B cell (primary cell): ENCODE measurements at regions of chr6 and their contacts with region 1.

Region 1: DNA sequence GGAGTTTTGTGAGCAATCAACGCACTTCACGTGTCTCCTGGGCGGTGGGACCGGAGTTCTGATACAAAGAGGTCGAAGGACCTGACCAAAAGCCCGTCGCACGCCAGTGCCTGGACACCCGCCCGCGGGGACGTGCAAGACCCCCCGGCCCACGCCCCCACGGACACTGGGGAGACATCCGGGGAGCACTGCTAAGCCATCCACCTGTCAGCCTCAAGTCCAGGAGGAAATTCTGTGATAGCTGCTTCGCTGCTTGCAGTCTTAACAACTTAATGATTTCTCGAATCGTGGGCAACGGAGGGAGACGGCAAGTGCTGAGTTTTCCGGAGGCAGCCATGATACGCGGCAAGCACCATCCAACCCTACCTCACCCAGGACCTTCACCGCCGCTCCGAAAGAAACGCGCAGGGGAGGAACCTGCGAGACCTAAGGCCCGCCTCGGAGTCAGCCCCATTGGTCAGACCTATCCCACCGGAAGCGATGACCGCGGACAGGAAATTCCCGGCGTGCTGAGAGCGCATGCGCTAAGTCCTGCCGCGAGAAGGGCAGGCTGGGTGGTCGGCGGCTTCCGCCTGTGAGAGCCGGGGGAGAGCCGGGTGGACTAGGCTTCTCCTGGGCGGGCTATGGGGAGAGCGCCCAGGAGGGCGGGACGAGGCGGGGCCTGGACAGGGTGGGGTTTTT is at the start of gene TFB1M:
- DNase-seq: peak; percentile 98
- ATAC-seq: peak; percentile 93
- H3K4me3 ChIP-seq: peak within 1 kb of the TSS; percentile 68 to 92 (median 92)
- H3K4me3 Mint-ChIP-seq: peak within 1 kb of the TSS; percentile 100
- H3K27ac ChIP-seq: peak within 1 kb of the TSS; percentile 79 to 84
- H3K27ac Mint-ChIP-seq: peak within 1 kb of the TSS; percentile 97
- H3K4me1 ChIP-seq: peaks cover 4% of the 10 kb centered on the region in 2 donors
- H3K4me1 Mint-ChIP-seq: peaks cover 37% of the 10 kb centered on the region
- H3K27me3 ChIP-seq: no peaks in the 10 kb centered on the region
- H3K27me3 Mint-ChIP-seq: no peaks in the 10 kb centered on the region
- CTCF ChIP-seq: no peak
- total RNA-seq, gene TFB1M: 49.9 and 58.0 TPM in 2 replicates

Region 2: DNA sequence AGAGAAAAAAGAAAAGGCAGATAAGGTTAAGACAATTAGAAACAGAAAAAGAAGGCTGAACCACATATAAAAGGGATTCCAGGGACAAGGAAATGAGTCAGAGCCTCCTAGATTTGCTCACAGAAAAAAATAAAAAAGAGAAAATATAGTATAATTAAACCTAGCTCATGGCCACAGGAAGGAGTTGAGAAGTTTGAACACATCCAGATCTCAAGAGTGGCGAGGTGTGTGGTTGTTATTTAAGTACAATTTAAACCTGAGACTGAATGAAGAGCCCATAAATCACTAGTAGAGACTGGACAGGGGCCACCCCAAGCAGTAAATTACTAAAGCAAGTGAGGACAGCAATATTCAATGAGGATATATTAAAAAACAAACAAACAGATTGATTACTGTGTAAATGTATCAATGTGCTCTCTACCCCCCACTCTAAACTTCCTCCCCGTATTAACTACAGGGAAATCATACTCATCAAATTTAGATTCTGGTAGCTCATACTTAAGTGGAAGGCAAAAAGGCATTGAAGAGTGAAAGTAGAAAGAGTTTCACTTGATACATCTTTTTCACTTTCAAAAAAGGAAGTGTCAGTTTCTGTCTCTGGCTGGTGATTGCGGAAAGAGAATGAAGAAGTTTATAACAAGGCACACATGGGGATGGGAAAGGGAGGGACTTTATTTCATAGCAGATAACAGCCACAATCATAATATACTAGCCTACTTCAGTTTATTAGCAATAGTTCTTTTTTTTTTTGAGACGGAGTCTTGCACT is 630.3 kb before region 1 on chr6:
- CTCF ChIA-PET with region 1: no interaction called
- POLR2A ChIA-PET with region 1: no interaction called
- intact Hi-C with region 1: loop called (anchors 5 kb)
- DNase-seq: peak; percentile 78
- ATAC-seq: peak; percentile 88
- H3K4me3 ChIP-seq: peak overlapping the region in 1 of 5 experiments; percentile 31
- H3K4me3 Mint-ChIP-seq: peak overlapping the region; percentile 20
- H3K27ac ChIP-seq: peak overlapping the region; percentile 52 to 76
- H3K27ac Mint-ChIP-seq: peak overlapping the region; percentile 50
- H3K4me1 ChIP-seq: peaks cover 19 to 38% of the 10 kb centered on the region in 2 donors
- H3K4me1 Mint-ChIP-seq: peaks cover 32% of the 10 kb centered on the region
- H3K27me3 ChIP-seq: no peaks in the 10 kb centered on the region
- H3K27me3 Mint-ChIP-seq: no peaks in the 10 kb centered on the region
- CTCF ChIP-seq: no peak

Region 3: GRCh38 chr6:155181498-155181897 is 132.7 kb before region 1 on chr6:
- CTCF ChIA-PET with region 1: interaction called, 15 read pairs
- POLR2A ChIA-PET with region 1: no interaction called
- intact Hi-C with region 1: loop called (anchors 1 kb)
- DNase-seq: peak; percentile 72
- ATAC-seq: peak; percentile 61
- H3K4me3 ChIP-seq: peak overlapping the region in 1 of 5 experiments; percentile 4
- H3K4me3 Mint-ChIP-seq: peak overlapping the region; percentile 53
- H3K27ac ChIP-seq: peak overlapping the region; percentile 77 to 80
- H3K27ac Mint-ChIP-seq: peak overlapping the region; percentile 76
- H3K4me1 ChIP-seq: peaks cover 26 to 36% of the 10 kb centered on the region in 2 donors
- H3K4me1 Mint-ChIP-seq: peaks cover 41% of the 10 kb centered on the region
- H3K27me3 ChIP-seq: no peaks in the 10 kb centered on the region
- H3K27me3 Mint-ChIP-seq: no peaks in the 10 kb centered on the region
- CTCF ChIP-seq: no peak

Region 4: DNA sequence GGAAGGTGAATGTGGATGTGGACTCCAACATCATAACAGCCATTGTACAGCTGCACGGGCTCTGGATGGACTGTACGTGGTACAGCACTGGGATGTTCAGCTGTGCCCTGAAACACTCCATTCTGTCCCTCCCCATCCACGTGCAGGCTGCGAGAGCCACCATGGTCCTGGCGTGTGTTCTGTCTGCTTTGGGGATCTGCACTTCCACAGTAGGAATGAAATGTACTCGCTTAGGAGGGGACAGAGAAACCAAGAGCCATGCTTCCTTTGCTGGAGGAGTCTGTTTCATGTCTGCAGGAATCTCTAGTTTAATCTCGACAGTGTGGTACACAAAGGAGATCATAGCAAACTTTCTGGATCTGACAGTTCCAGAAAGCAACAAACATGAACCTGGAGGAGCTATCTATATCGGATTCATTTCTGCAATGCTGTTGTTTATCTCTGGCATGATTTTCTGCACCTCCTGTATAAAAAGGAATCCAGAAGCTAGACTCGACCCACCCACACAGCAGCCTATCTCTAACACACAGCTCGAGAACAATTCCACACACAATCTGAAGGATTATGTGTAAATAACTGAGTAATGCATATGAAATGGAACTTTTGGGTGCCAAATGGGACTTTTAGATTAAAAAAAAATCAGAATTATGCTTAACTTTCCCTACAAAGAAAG is 38.3 kb before region 1 on chr6:
- CTCF ChIA-PET with region 1: no interaction called
- POLR2A ChIA-PET with region 1: no interaction called
- intact Hi-C with region 1: no loop called
- DNase-seq: no peak
- ATAC-seq: no peak
- H3K4me3 ChIP-seq: no peak overlapping the region
- H3K4me3 Mint-ChIP-seq: no peak overlapping the region
- H3K27ac ChIP-seq: no peak overlapping the region
- H3K27ac Mint-ChIP-seq: no peak overlapping the region
- H3K4me1 ChIP-seq: no peaks in the 10 kb centered on the region
- H3K4me1 Mint-ChIP-seq: no peaks in the 10 kb centered on the region
- H3K27me3 ChIP-seq: no peaks in the 10 kb centered on the region
- H3K27me3 Mint-ChIP-seq: no peaks in the 10 kb centered on the region
- CTCF ChIP-seq: no peak

Region 5: DNA sequence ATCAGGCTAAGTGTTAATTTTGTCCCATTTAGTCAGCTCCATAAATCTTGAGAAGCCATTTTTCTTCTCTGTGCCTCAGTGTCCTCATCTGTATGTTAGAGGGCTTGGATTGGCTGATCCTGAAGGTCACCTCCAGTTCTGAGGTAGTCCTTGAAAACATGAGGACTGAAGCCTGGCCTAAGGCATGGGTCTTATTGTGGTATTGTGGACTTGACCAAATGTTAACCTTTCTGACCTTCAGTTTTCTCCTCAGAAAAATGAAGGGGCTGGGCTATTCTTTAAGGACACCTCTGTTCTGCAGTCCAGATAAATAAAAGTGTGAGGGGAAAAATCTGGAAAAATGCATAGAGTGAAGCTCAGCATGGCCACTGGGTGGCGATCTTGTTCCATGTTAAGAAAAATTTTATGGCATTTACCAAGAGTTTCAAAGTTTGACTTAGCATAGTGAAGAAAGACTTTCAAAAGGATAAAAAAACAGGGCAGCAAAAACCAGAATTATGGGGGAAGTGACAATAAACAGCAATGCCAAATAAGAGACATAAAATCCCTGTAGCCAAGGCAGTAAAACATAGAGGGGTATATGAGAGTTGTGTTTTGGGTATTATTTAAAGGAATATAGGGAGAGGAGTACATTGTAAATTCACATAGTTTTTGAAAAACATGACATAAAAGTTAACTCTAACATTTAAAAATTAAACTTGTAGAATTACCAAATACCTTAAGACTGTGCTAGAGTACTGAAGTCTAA is 13.3 kb after region 1 on chr6:
- CTCF ChIA-PET with region 1: interaction called, 16 read pairs
- POLR2A ChIA-PET with region 1: no interaction called
- intact Hi-C with region 1: no loop called
- DNase-seq: peak; percentile 75
- ATAC-seq: peak; percentile 39
- H3K4me3 ChIP-seq: no peak overlapping the region
- H3K4me3 Mint-ChIP-seq: no peak overlapping the region
- H3K27ac ChIP-seq: no peak overlapping the region
- H3K27ac Mint-ChIP-seq: no peak overlapping the region
- H3K4me1 ChIP-seq: no peaks in the 10 kb centered on the region
- H3K4me1 Mint-ChIP-seq: peaks cover 3% of the 10 kb centered on the region
- H3K27me3 ChIP-seq: no peaks in the 10 kb centered on the region
- H3K27me3 Mint-ChIP-seq: no peaks in the 10 kb centered on the region
- CTCF ChIP-seq: peak; percentile 94

Region 6: DNA sequence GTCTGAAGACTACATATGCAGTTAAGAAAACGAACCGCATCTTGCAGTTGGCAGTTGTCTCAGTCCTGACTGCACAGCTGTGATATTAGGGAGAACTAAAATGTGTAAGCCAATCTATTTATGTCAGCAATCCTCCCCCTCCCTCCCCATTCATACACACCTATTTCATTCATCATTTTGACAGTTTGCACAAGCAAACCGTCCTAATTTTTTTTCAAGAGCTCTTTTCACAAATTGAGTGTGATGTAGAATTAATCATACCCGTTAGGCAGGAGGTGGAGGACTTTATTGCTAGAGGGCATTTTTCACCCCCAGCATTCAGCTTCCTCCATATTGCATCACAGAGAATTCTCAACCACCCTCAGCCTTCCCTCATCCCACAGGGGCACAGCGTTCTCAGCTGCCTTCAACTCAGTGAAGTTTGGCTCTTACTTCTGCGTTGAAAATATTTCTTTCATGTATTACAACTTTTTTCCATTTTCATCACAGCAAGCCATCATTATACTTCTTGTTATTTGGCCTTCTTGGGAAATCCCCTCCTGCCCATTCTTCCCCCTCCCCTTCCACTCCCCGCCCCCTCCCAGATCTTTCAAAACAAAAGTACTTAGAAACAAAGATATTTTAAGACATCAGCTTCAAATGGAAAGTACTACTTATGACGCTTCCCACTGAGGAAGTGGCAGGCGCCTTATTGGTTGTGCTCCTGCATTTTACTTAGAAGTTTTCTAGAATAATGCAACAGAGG is 104.0 kb after region 1 on chr6:
- CTCF ChIA-PET with region 1: interaction called, 3 read pairs
- POLR2A ChIA-PET with region 1: no interaction called
- intact Hi-C with region 1: loop called (anchors 1 kb)
- DNase-seq: peak; percentile 81
- ATAC-seq: peak; percentile 83
- H3K4me3 ChIP-seq: peak overlapping the region; percentile 23 to 60 (median 30)
- H3K4me3 Mint-ChIP-seq: peak overlapping the region; percentile 81
- H3K27ac ChIP-seq: peak overlapping the region; percentile 80 to 85
- H3K27ac Mint-ChIP-seq: peak overlapping the region; percentile 93
- H3K4me1 ChIP-seq: peaks cover 35 to 43% of the 10 kb centered on the region in 2 donors
- H3K4me1 Mint-ChIP-seq: peaks cover 53% of the 10 kb centered on the region
- H3K27me3 ChIP-seq: no peaks in the 10 kb centered on the region
- H3K27me3 Mint-ChIP-seq: no peaks in the 10 kb centered on the region
- CTCF ChIP-seq: no peak